ENCODE measurements at regions of chr6 and their contacts with region 1.

Region 1: DNA sequence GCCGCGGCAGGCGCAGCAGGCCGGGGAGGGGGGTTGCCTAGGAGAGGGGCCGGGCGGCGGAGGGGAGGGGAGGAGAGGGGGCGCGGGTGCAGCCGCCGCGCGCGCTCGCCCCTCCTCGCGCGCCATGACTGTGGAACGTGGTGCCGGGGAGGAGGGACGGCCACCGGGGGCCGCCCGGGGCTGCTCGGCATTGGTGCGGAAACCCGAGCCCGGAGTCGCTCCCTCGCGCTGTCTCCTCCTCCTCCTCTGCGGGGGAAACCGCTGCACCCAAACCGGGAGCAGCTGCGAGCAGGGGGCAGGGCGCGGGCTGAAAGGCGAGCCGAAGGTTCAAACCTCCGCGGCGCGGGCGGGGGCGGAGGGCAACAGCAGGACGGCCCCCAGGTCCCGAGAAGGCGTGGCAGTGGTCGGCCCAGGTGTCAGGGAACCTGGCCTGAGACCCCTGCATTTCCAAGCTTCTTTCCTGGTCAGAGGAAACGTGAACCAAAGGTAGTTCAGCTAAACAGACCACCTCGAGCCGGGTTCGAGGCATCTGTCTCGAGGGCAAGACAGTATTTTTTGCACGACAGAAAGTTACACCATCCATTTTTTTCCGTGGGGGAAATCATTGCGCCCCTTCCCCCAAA is 1.4 kb upstream of the TRERF1 start:
- DNase-seq: peak; percentile 90 to 93 (median 92)
- ATAC-seq: peak; percentile 88 to 95 (median 93)
- H3K4me3 ChIP-seq: peak overlapping the region; percentile 62 to 98 (median 80)
- H3K27ac ChIP-seq: peak overlapping the region; percentile 69 to 95 (median 90)
- H3K4me1 ChIP-seq: peaks cover 0 to 51% (median 24%) of the 10 kb centered on the region in 12 donors
- H3K27me3 ChIP-seq: no peaks in the 10 kb centered on the region
- CTCF ChIP-seq: peak in 2 of 12 donors; percentile 9 to 15
- POLR2A ChIP-seq: peak in 1 of 2 donors; percentile 55

Region 2: GRCh38 chr6:42217519-42218367 is 235.4 kb before region 1 on chr6 and contains the start of gene MRPS10:
- intact Hi-C with region 1: loop called in 2 of 10 experiments (anchors 10 kb)
- DNase-seq: peak; percentile 93 to 94 (median 93)
- ATAC-seq: peak; percentile 99 to 100 (median 100)
- H3K4me3 ChIP-seq: peak within 1 kb of the TSS; percentile 49 to 90 (median 80)
- H3K27ac ChIP-seq: peak within 1 kb of the TSS; percentile 53 to 87 (median 80)
- H3K4me1 ChIP-seq: peaks cover 0 to 23% (median 12%) of the 10 kb centered on the region in 12 donors
- H3K27me3 ChIP-seq: no peaks in the 10 kb centered on the region
- CTCF ChIP-seq: peak in 1 of 12 donors; percentile 22
- POLR2A ChIP-seq: peak in 1 of 2 donors; percentile 62
- total RNA-seq, gene MRPS10: 47.5 to 73.5 (median 57.3) TPM

Region 3: GRCh38 chr6:42279144-42279781 is 173.9 kb before region 1 on chr6:
- intact Hi-C with region 1: loop called in 3 of 10 experiments (anchors 5 kb)
- DNase-seq: peak in 2 of 5 donors; percentile 41 to 64
- ATAC-seq: peak; percentile 30 to 64 (median 48)
- H3K4me3 ChIP-seq: peak overlapping the region in 1 of 12 donors; percentile 17
- H3K27ac ChIP-seq: peak overlapping the region in 11 of 12 donors; percentile 2 to 78 (median 51)
- H3K4me1 ChIP-seq: peaks cover 5 to 60% (median 41%) of the 10 kb centered on the region in 12 donors
- H3K27me3 ChIP-seq: no peaks in the 10 kb centered on the region
- CTCF ChIP-seq: no peak
- POLR2A ChIP-seq: no peak

Region 4: GRCh38 chr6:42304053-42304712 is 149.0 kb before region 1 on chr6:
- intact Hi-C with region 1: no loop called
- DNase-seq: no peak
- ATAC-seq: no peak
- H3K4me3 ChIP-seq: no peak overlapping the region
- H3K27ac ChIP-seq: no peak overlapping the region
- H3K4me1 ChIP-seq: peaks cover 0 to 6% (median 0%) of the 10 kb centered on the region in 12 donors
- H3K27me3 ChIP-seq: no peaks in the 10 kb centered on the region
- CTCF ChIP-seq: no peak
- POLR2A ChIP-seq: no peak

Region 5: GRCh38 chr6:42378125-42378524 is 75.0 kb before region 1 on chr6:
- intact Hi-C with region 1: no loop called
- DNase-seq: no peak
- ATAC-seq: no peak
- H3K4me3 ChIP-seq: no peak overlapping the region
- H3K27ac ChIP-seq: peak overlapping the region in 1 of 12 donors; percentile 24
- H3K4me1 ChIP-seq: peaks cover 0 to 56% (median 0%) of the 10 kb centered on the region in 12 donors
- H3K27me3 ChIP-seq: no peaks in the 10 kb centered on the region
- CTCF ChIP-seq: no peak
- POLR2A ChIP-seq: no peak

Region 6: GRCh38 chr6:42404484-42404883 is 48.7 kb before region 1 on chr6:
- intact Hi-C with region 1: loop called in 3 of 10 experiments (anchors 2 to 5 kb)
- DNase-seq: peak in 3 of 5 donors; percentile 20 to 68 (median 46)
- ATAC-seq: peak; percentile 63 to 88 (median 80)
- H3K4me3 ChIP-seq: no peak overlapping the region
- H3K27ac ChIP-seq: peak overlapping the region in 11 of 12 donors; percentile 52 to 78 (median 65)
- H3K4me1 ChIP-seq: peaks cover 0 to 74% (median 35%) of the 10 kb centered on the region in 12 donors
- H3K27me3 ChIP-seq: no peaks in the 10 kb centered on the region
- CTCF ChIP-seq: no peak
- POLR2A ChIP-seq: no peak

Region 7: DNA sequence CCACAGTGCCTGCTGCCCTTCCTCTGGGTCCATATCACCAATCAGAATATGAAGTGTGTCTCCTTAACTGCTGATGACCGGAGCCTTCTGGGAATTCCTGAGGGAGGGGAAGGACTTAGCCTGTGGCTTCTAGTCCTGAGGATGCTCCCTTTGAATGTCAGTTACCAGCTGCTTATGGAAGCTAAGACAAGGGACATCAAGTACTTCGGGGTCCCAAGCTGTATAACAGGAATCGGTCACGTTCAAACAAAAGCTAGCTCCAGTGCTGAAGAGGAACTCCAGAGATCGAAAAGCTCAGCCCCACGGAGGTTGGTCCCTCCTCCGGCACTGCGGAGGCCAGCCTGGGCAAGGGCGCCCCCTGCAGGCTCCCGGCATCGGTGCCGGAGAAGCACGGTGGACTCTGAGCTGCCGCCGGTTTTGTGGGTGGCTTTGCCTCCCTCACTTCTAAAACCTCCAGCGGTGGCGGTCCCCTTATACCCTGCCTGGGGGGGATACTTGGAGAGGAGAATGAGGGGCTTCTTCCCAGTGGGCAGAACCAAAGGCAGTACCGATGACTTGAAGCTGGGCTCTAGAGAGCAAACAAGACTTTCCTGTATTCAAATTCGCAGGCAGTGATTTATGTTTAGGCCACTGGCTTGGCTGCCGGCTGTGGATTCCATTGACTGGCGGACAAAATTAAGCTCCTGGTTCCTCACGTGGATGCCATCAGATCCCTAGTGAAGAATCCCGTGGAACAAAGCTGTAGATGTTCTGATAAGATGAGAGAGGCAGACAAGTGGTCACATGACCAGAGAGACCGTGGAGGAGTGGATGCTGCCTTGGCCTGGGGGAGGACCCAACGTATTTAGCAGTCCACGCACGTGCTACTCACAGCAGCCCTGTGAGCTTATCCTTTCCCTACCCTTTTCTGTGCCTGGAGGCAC is 94.5 kb after region 1 on chr6:
- intact Hi-C with region 1: loop called in 1 of 10 experiments (anchors 5 kb)
- DNase-seq: peak; percentile 82 to 92 (median 84)
- ATAC-seq: peak; percentile 94 to 99 (median 99)
- H3K4me3 ChIP-seq: peak overlapping the region; percentile 13 to 76 (median 53)
- H3K27ac ChIP-seq: peak overlapping the region in 9 of 12 donors; percentile 31 to 73 (median 45)
- H3K4me1 ChIP-seq: peaks cover 0 to 14% (median 4%) of the 10 kb centered on the region in 12 donors
- H3K27me3 ChIP-seq: peaks cover 0 to 4% (median 0%) of the 10 kb centered on the region in 9 donors
- CTCF ChIP-seq: peak; percentile 96 to 100 (median 99)
- POLR2A ChIP-seq: peak in 1 of 2 donors; percentile 24

Region 8: DNA sequence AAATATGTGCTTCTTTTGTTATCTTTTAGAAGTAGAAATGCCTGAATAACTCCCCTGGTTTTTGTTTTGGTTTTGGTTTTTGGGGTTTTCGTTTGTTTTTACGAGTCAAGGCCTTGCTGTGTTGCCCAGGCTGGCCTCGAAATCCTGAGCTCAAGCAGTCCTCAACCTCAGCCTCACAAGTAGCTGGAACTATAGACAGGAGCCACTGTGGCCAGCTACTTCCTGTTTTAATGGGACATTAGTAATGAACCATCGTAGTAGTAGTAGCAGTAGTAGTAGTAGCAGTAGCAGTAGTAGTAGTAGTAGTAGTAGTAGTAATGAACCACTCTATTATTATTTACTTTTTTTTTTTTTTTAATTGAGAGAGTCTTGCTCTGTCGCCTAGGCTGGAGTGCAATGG is 176.7 kb after region 1 on chr6:
- intact Hi-C with region 1: no loop called
- DNase-seq: no peak
- ATAC-seq: no peak
- H3K4me3 ChIP-seq: no peak overlapping the region
- H3K27ac ChIP-seq: peak overlapping the region in 1 of 12 donors; percentile 4
- H3K4me1 ChIP-seq: peaks cover 0 to 13% (median 1%) of the 10 kb centered on the region in 12 donors
- H3K27me3 ChIP-seq: no peaks in the 10 kb centered on the region
- CTCF ChIP-seq: no peak
- POLR2A ChIP-seq: no peak

Measured in heart left ventricle (tissue), 16 donors.